CD8-positive, alpha-beta T cell (primary cell): ENCODE measurements at regions of chr14 and their contacts with region 1.

Region 1: GRCh38 chr14:88955455-88955854 is 131.0 kb downstream of the TTC8 start:
- DNase-seq: no peak
- ATAC-seq: no peak
- H3K4me3 ChIP-seq: no peak overlapping the region
- H3K4me3 Mint-ChIP-seq: no peak overlapping the region
- H3K27ac ChIP-seq: no peak overlapping the region
- H3K27ac Mint-ChIP-seq: no peak overlapping the region
- H3K4me1 ChIP-seq: no peaks in the 10 kb centered on the region
- H3K4me1 Mint-ChIP-seq: no peaks in the 10 kb centered on the region
- H3K27me3 ChIP-seq: no peaks in the 10 kb centered on the region
- H3K27me3 Mint-ChIP-seq: peaks cover 11% of the 10 kb centered on the region
- CTCF ChIP-seq: no peak

Region 2: GRCh38 chr14:88168498-88169165 is 786.8 kb before region 1 on chr14:
- CTCF ChIA-PET with region 1: no interaction called
- POLR2A ChIA-PET with region 1: no interaction called
- intact Hi-C with region 1: no loop called
- DNase-seq: peak; percentile 24 to 77 (median 55)
- ATAC-seq: peak; percentile 96
- H3K4me3 ChIP-seq: no peak overlapping the region
- H3K4me3 Mint-ChIP-seq: peak overlapping the region; percentile 58
- H3K27ac ChIP-seq: no peak overlapping the region
- H3K27ac Mint-ChIP-seq: no peak overlapping the region
- H3K4me1 ChIP-seq: no peaks in the 10 kb centered on the region
- H3K4me1 Mint-ChIP-seq: peaks cover 16% of the 10 kb centered on the region
- H3K27me3 ChIP-seq: no peaks in the 10 kb centered on the region
- H3K27me3 Mint-ChIP-seq: peaks cover 19% of the 10 kb centered on the region
- CTCF ChIP-seq: peak; percentile 70

Region 3: GRCh38 chr14:88975043-88975830 is 19.8 kb after region 1 on chr14:
- CTCF ChIA-PET with region 1: no interaction called
- POLR2A ChIA-PET with region 1: no interaction called
- intact Hi-C with region 1: loop called in 1 of 2 experiments (anchors 1 kb)
- DNase-seq: no peak
- ATAC-seq: no peak
- H3K4me3 ChIP-seq: no peak overlapping the region
- H3K4me3 Mint-ChIP-seq: no peak overlapping the region
- H3K27ac ChIP-seq: no peak overlapping the region
- H3K27ac Mint-ChIP-seq: no peak overlapping the region
- H3K4me1 ChIP-seq: no peaks in the 10 kb centered on the region
- H3K4me1 Mint-ChIP-seq: no peaks in the 10 kb centered on the region
- H3K27me3 ChIP-seq: peaks cover 2 to 4% of the 10 kb centered on the region in 2 experiments
- H3K27me3 Mint-ChIP-seq: peaks cover 50% of the 10 kb centered on the region
- CTCF ChIP-seq: no peak

Region 4: DNA sequence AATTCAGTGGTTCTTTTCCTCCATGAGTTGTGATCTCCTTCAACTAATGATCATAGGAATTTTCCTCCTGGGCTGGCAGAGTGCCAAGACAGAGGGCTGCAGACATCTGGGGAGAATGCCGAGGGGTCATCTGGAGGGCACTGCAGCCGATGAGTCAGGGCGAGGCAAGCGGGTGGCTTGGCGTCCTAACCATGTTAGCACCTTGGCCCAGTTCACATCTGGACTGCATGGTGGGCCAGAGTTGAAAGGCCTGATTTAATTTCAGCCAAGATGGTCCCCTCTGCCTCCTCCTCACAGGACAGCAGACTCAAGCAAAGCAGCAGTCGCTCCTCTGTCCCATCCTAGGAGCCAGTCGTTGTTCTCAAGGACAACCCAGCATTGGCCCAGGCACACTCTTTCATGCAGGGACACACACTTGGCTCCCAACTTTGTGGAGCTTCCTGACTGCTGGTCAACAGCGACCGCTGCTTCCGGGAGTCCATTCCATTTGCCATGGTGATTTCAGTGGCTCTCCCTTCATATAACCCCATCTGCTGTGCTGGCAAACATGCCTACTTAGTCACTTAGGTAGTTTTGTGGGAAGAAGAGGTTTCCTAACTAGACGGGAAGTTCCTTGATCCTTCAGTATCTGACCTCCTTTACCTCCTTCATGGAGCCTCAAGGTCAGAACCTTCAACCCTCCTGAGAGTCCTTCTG is 30.8 kb after region 1 on chr14:
- CTCF ChIA-PET with region 1: no interaction called
- POLR2A ChIA-PET with region 1: no interaction called
- intact Hi-C with region 1: no loop called
- DNase-seq: no peak
- ATAC-seq: no peak
- H3K4me3 ChIP-seq: no peak overlapping the region
- H3K4me3 Mint-ChIP-seq: no peak overlapping the region
- H3K27ac ChIP-seq: no peak overlapping the region
- H3K27ac Mint-ChIP-seq: no peak overlapping the region
- H3K4me1 ChIP-seq: no peaks in the 10 kb centered on the region
- H3K4me1 Mint-ChIP-seq: no peaks in the 10 kb centered on the region
- H3K27me3 ChIP-seq: no peaks in the 10 kb centered on the region
- H3K27me3 Mint-ChIP-seq: peaks cover 8% of the 10 kb centered on the region
- CTCF ChIP-seq: no peak

Region 5: DNA sequence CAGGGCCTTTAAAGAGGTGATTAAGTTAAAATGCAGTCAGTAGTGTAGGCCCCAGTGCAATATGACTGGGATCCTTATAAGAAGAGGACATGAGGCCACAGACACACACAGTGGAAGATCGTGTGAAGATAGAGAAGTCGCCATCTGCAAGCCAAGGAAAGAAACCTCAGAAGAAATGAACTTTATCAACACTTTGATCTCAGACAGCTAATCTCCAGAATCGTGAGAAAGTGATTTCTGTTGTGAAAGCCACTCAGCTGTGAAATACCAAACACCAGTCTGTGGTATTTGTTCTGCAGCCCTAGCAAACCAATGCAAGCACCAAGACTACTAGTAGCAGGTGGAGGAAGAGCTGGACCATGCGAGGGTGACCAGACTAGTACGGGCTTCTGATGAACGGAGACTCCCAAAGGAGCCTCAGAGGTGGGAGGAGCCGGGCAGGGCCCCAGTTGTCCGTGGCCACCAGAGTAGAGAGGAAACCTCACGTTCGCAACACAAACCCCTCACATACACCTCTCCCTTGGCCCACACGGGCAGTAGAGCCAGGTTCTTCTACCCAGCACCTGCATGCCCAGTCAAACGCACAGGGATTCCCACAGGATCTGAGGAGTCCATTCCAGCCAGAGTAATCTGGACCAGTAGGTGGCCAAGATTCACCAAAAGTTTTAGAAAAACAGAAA is 112.0 kb after region 1 on chr14:
- CTCF ChIA-PET with region 1: no interaction called
- POLR2A ChIA-PET with region 1: no interaction called
- intact Hi-C with region 1: no loop called
- DNase-seq: peak in 2 of 9 experiments; percentile 53 to 65
- ATAC-seq: peak; percentile 51
- H3K4me3 ChIP-seq: no peak overlapping the region
- H3K4me3 Mint-ChIP-seq: no peak overlapping the region
- H3K27ac ChIP-seq: no peak overlapping the region
- H3K27ac Mint-ChIP-seq: no peak overlapping the region
- H3K4me1 ChIP-seq: peaks cover 8% of the 10 kb centered on the region
- H3K4me1 Mint-ChIP-seq: peaks cover 14% of the 10 kb centered on the region
- H3K27me3 ChIP-seq: peaks cover 0 to 10% of the 10 kb centered on the region in 2 experiments
- H3K27me3 Mint-ChIP-seq: peaks cover 30% of the 10 kb centered on the region
- CTCF ChIP-seq: no peak